ENCODE measurements at regions of chr2 and their contacts with region 1.

Region 1: DNA sequence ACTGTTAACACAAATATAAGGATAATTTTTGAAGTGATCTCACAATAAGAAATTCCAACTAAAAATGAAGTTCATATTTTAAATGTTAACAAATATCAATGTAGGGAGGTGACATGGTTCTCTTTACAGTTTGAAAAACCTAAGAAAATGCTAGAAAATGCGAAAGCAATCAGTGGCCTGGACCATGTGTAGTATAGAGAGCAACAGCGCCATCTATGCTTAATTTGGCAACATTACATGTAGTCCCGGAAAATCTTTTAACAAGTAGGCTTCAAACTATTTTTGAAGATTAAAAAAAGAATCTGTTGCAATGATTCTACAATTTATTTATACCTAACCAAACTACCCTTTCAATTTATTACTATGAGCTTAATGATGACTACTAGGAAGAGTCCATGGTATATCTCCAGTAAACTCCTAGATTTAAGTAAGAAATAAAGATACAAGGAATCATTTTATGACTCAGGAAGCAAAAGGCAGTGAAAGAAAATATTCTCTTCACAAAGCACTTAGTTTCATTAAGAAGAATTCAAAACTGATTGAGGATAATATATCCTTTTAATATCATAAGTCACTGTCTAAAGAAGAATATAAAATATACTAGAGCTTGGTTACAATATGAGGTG is 33.3 kb downstream of the NDUFA10 start:
- DNase-seq: no peak

Region 2: DNA sequence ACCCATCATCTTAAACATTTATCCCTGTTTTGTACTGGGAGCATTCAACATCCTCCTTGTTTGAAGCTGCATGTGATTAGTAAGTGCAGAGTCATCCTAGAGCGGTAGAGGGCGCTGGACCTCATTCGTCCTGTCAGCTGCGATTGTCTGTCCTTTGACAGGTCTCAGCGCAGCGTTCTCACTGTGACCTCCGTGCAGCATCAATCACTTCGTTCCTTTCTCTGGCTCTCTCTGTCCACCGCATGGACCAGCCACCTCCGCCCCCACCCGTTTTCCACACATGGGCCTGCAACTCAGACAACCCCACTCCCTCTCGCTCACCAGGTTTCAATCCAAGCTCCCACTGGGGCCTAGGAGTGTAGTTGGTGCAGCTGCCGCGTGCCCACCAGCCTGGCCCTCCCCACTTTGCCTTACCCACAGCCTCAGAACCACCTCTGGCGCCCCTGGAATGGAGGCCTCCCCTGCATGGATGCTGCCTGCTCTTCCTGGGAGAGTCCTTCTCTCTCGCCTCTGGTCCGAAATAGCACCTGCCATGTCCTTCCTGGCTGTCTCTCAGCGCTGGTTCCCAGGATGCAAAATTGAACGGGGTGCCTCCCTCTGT is 57.1 kb before region 1 on chr2:
- intact Hi-C with region 1: loop called (anchors 5 kb)
- DNase-seq: peak; percentile 90

Region 3: DNA sequence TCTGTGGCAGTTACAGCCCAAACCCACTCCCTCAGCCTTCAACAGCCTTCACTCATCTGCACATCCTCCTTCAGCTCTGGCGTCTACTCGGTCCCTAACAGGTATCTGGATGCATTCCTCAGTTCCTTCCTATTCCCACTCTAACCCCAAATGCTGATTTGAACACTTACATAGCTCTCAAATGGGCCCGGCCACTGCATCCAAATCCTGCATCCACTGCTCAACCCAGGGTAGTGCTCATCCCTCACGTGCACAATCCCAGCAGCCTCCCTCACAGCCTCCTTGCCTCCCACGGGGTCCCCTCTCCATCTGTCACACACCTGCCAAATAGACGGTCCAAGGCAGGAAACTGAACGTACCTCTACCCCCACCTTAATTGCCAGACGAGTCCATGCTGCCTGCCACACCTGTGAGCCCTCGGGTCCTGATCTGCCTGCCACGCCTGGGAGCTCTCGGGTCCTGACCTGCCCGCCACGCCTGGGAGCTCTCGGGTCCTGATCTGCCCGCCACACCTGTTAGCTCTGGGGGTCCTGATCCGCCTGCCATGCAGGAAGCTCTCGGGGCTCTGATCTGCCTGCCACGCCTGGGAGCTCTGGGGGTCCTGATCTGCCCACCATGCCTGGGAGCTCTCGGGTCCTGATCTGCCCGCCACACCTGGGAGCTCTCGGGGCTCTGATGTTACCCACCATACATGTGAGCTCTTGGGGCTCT is 51.6 kb after region 1 on chr2:
- intact Hi-C with region 1: no loop called
- DNase-seq: no peak

Measured in cardiac septum (tissue), 1 donor.